ENCODE measurements at regions of chr6 and their contacts with region 1.

Region 1: GRCh38 chr6:149235130-149235561 is 82.4 kb upstream of the TAB2 start:
- DNase-seq: no peak
- H3K4me3 Mint-ChIP-seq: no peak overlapping the region
- H3K27ac Mint-ChIP-seq: peak overlapping the region; percentile 91
- H3K4me1 Mint-ChIP-seq: peaks cover 53% of the 10 kb centered on the region
- H3K27me3 Mint-ChIP-seq: no peaks in the 10 kb centered on the region

Region 2: DNA sequence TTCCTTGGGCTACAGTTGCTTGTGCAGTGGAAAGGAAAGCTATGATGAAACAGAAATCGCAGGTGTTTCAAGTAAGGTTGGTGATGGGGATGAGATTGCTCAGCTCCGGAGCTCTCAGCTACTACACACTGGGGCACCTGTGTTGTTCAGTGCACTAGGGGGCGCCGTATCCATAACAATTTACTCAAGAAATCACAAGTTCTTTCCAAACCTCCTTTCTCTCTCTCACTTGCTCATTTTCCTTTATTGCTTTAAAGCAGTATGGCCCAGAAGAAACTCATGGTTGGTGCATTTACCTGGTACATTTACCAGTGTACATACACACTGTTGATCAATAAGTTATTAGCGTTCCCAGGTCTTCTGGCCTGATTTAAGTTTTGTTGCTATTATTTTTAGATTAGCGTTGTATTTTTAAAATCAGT is 152.8 kb before region 1 on chr6:
- CTCF ChIA-PET with region 1: no interaction called
- POLR2A ChIA-PET with region 1: interaction called, 10 read pairs
- intact Hi-C with region 1: loop called (anchors 1 kb)
- DNase-seq: peak; percentile 93
- H3K4me3 Mint-ChIP-seq: no peak overlapping the region
- H3K27ac Mint-ChIP-seq: peak overlapping the region; percentile 26
- H3K4me1 Mint-ChIP-seq: peaks cover 79% of the 10 kb centered on the region
- H3K27me3 Mint-ChIP-seq: no peaks in the 10 kb centered on the region

Region 3: DNA sequence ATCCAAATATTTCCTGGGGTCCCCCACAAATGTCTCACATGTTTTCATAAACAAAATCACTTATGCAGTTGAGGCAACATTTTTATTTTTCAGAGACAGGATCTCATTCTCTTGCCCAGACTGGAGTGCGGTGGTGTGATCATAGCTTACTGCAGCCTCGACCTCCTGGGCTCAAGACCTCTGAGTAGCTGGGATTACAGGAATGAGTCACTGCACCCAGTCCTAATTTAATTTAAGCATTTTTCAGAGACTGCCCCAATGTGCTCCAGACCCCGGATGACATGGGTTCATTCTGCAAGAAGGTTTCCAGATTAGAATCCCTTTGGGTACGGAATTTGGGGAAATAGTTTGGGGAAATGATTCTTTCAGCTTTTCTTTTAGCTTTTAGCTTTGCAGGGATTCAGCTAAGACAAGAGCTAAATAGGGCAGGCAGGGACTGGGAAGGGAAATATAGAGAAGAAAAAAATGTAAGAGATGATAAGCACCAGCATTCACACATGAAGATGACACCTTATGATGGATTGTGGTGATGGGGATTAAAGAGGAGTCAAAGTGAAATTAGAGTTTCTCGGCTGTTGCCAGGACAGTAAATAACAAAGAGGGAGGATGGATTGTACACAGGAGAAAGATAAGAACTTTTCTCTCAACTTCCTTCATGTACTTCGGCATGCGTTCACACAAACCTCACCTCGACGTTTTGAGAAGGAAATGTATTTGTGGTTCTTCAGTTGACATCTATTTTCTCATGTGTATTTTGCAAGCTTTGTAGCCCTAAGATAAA is 87.0 kb before region 1 on chr6:
- CTCF ChIA-PET with region 1: no interaction called
- POLR2A ChIA-PET with region 1: interaction called, 4 read pairs
- intact Hi-C with region 1: loop called (anchors 1 kb)
- DNase-seq: peak; percentile 47
- H3K4me3 Mint-ChIP-seq: peak overlapping the region; percentile 45
- H3K27ac Mint-ChIP-seq: peak overlapping the region; percentile 91
- H3K4me1 Mint-ChIP-seq: peaks cover 87% of the 10 kb centered on the region
- H3K27me3 Mint-ChIP-seq: no peaks in the 10 kb centered on the region

Region 4: DNA sequence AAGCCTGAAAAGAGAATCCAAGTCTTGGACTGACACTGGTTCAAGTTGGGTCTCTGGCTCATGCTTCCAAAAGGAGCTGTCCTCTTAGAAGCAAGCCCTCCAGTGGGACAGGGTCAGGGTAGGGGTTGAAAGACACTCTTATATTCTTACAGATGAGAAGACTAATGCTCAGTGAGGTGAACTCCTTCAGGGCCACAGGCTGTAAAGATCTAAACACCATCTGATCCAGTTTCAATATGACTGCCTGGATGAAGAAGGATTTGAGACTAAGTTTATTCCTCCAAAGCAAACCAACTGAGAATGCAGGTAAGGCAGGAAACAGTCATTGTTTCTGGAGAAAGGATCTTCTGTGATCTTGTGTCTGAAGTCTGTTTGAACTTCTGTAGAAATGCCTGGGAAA is 16.7 kb before region 1 on chr6:
- CTCF ChIA-PET with region 1: interaction called, 3 read pairs
- POLR2A ChIA-PET with region 1: interaction called, 4 read pairs
- intact Hi-C with region 1: loop called (anchors 1 kb)
- DNase-seq: no peak
- H3K4me3 Mint-ChIP-seq: no peak overlapping the region
- H3K27ac Mint-ChIP-seq: peak overlapping the region; percentile 67
- H3K4me1 Mint-ChIP-seq: peaks cover 32% of the 10 kb centered on the region
- H3K27me3 Mint-ChIP-seq: no peaks in the 10 kb centered on the region

Region 5: GRCh38 chr6:149277621-149278020 is 42.5 kb after region 1 on chr6:
- CTCF ChIA-PET with region 1: no interaction called
- POLR2A ChIA-PET with region 1: no interaction called
- intact Hi-C with region 1: loop called (anchors 1 kb)
- DNase-seq: no peak
- H3K4me3 Mint-ChIP-seq: no peak overlapping the region
- H3K27ac Mint-ChIP-seq: no peak overlapping the region
- H3K4me1 Mint-ChIP-seq: peaks cover 33% of the 10 kb centered on the region
- H3K27me3 Mint-ChIP-seq: no peaks in the 10 kb centered on the region

Region 6: DNA sequence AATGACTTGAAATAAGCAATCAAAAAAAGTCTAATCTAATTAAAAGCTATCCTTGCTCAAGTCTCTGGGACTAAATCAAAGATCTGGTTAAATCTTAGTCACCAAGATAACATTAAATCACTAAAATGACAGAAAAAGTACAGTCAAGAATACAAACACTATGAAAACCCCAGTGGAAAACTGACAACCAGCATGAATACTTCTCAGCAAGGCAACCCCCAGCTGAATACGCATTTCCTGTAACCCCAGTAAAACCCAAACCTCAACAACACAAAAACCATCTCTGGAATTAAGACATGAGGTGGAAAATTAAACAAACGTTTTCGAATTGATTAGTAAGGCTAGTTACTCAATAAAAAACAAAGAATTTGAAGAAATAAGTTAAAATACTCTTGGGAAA is 273.3 kb after region 1 on chr6:
- CTCF ChIA-PET with region 1: no interaction called
- POLR2A ChIA-PET with region 1: no interaction called
- intact Hi-C with region 1: loop called (anchors 5 kb)
- DNase-seq: peak; percentile 68
- H3K4me3 Mint-ChIP-seq: peak overlapping the region; percentile 50
- H3K27ac Mint-ChIP-seq: peak overlapping the region; percentile 95
- H3K4me1 Mint-ChIP-seq: peaks cover 70% of the 10 kb centered on the region
- H3K27me3 Mint-ChIP-seq: no peaks in the 10 kb centered on the region